ENCODE measurements at regions of chr15 and their contacts with region 1.

Region 1: GRCh38 chr15:41465822-41466421 is 27.8 kb upstream of the ITPKA start:
- DNase-seq: peak; percentile 34
- ATAC-seq: peak; percentile 81
- H3K4me3 Mint-ChIP-seq: no peak overlapping the region
- H3K27ac Mint-ChIP-seq: no peak overlapping the region
- H3K4me1 Mint-ChIP-seq: no peaks in the 10 kb centered on the region
- H3K27me3 Mint-ChIP-seq: no peaks in the 10 kb centered on the region

Region 2: GRCh38 chr15:41438206-41438605 is 27.7 kb before region 1 on chr15:
- CTCF ChIA-PET with region 1: interaction called, 26 read pairs
- POLR2A ChIA-PET with region 1: no interaction called
- intact Hi-C with region 1: no loop called
- DNase-seq: no peak
- ATAC-seq: no peak
- H3K4me3 Mint-ChIP-seq: no peak overlapping the region
- H3K27ac Mint-ChIP-seq: no peak overlapping the region
- H3K4me1 Mint-ChIP-seq: peaks cover 7% of the 10 kb centered on the region
- H3K27me3 Mint-ChIP-seq: no peaks in the 10 kb centered on the region

Region 3: GRCh38 chr15:41501191-41501917 is 35.4 kb after region 1 on chr15:
- CTCF ChIA-PET with region 1: interaction called, 33 read pairs
- POLR2A ChIA-PET with region 1: no interaction called
- intact Hi-C with region 1: loop called in 1 of 2 experiments (anchors 5 kb)
- DNase-seq: peak; percentile 69
- ATAC-seq: peak; percentile 71
- H3K4me3 Mint-ChIP-seq: peak overlapping the region; percentile 57
- H3K27ac Mint-ChIP-seq: no peak overlapping the region
- H3K4me1 Mint-ChIP-seq: peaks cover 16% of the 10 kb centered on the region
- H3K27me3 Mint-ChIP-seq: peaks cover 55% of the 10 kb centered on the region

Region 4: GRCh38 chr15:41512940-41513510 is 47.1 kb after region 1 on chr15:
- CTCF ChIA-PET with region 1: interaction called, 33 read pairs
- POLR2A ChIA-PET with region 1: no interaction called
- intact Hi-C with region 1: no loop called
- DNase-seq: peak; percentile 52
- ATAC-seq: no peak
- H3K4me3 Mint-ChIP-seq: peak overlapping the region; percentile 52
- H3K27ac Mint-ChIP-seq: no peak overlapping the region
- H3K4me1 Mint-ChIP-seq: peaks cover 22% of the 10 kb centered on the region
- H3K27me3 Mint-ChIP-seq: peaks cover 30% of the 10 kb centered on the region

Region 5: DNA sequence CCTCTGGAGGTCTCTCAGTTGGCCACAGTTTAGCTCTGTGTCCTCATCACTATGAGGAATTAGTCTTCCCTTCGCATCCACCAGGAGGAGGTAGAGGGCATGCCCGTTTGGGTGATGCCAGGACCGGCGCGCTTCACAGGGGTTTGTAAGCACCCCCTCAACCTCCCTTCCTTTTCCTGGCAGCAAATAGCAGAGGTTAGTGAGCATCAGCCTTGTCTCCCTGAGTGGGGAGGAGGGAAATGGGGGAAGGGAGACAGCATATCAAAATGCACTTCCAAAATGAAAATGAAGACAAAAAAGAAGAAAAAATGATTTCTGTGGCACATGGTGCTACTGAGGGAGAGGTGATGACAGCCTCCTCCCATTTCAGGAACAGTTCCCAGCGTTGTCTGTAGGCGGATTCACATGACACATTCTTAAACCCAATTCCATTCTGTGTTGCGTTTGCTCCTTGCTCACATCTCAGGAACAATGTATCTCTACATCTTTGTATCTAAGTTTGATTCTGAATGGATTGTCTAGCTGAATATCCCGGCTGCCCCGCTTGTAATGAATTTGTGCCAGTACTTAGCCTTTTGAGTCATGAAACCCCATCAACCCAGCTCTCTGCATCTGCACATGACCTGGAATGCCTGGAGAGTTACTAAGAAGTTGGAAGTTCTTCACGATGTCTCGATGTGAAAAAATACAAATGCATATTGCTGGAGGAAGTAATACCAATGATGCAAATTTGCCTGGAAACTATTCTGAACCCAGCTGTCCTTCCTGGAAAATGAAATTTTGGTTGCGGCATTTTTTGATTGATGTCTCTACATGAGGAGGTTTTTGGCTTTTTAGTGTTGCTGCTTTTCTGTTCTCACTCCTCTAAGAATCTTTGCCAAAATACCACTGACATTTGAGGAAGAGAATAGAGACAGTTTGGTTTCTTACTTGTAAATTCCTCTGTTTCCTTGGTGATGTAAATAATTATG is 138.3 kb after region 1 on chr15:
- CTCF ChIA-PET with region 1: interaction called, 27 read pairs
- POLR2A ChIA-PET with region 1: no interaction called
- intact Hi-C with region 1: no loop called
- DNase-seq: peak; percentile 75
- ATAC-seq: peak; percentile 96
- H3K4me3 Mint-ChIP-seq: peak overlapping the region; percentile 58
- H3K27ac Mint-ChIP-seq: peak overlapping the region; percentile 40
- H3K4me1 Mint-ChIP-seq: peaks cover 11% of the 10 kb centered on the region
- H3K27me3 Mint-ChIP-seq: peaks cover 14% of the 10 kb centered on the region